HEK293 (cell line): ENCODE measurements at regions of chr11 and their contacts with region 1.

Region 1: DNA sequence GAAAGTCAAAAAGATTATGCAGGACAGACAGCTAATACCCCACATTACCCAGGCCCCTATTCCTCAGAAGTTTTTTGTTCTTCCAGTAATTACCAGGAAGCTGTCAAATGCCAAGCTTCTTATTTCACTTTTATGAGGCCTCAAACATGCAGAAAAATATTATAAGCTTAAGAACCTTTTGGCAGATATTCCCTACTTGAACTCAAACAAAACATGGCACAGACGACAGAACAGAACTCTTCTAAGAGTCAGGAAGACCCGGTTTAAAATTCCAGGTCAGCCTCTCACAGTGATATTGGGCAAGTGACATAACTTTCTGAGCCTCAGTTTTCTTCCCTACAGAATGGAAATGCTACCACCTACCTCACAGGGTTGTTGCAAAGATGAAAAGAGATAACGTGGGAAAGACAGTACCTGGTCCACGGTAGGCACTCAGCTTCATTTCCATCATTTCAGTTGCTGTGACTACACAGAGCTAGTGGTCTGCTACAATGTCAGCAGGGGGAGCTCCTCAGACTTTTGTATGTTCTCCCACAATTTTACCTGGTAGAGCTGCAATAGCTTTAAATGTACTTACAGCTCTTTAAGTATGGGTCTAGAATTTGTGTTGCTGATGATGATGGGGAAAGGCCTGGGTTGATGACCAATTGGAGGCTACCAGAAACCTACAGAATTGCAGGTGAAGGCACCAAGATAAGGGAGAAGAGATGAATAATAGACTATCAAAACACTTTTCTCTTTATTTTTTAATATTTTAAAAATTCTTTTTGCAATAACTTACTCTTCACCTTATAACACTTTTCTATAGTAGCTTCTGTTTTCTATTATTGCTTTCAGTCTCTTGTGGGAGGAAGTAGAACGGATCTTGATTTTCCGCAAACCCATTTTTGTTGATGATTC is 98.3 kb upstream of the CHRM4 start:
- H3K4me3 ChIP-seq: no peak overlapping the region
- H3K27ac ChIP-seq: no peak overlapping the region
- H3K4me1 ChIP-seq: no peaks in the 10 kb centered on the region
- CTCF ChIP-seq: no peak

Region 2: GRCh38 chr11:46392421-46393230 is 97.3 kb before region 1 on chr11:
- CTCF ChIA-PET with region 1: interaction called, 11 read pairs
- POLR2A ChIA-PET with region 1: no interaction called
- H3K4me3 ChIP-seq: peak overlapping the region; percentile 45
- H3K27ac ChIP-seq: no peak overlapping the region
- H3K4me1 ChIP-seq: no peaks in the 10 kb centered on the region
- CTCF ChIP-seq: no peak

Region 3: GRCh38 chr11:46513934-46514342 is 24.0 kb after region 1 on chr11:
- CTCF ChIA-PET with region 1: interaction called, 14 read pairs
- POLR2A ChIA-PET with region 1: no interaction called
- H3K4me3 ChIP-seq: no peak overlapping the region
- H3K27ac ChIP-seq: no peak overlapping the region
- H3K4me1 ChIP-seq: no peaks in the 10 kb centered on the region
- CTCF ChIP-seq: no peak

Region 4: GRCh38 chr11:46529095-46529905 is 39.4 kb after region 1 on chr11:
- CTCF ChIA-PET with region 1: interaction called, 46 read pairs
- POLR2A ChIA-PET with region 1: no interaction called
- H3K4me3 ChIP-seq: no peak overlapping the region
- H3K27ac ChIP-seq: no peak overlapping the region
- H3K4me1 ChIP-seq: no peaks in the 10 kb centered on the region
- CTCF ChIP-seq: peak; percentile 56; the same call in 1 of the 2 replicates

Region 5: GRCh38 chr11:46597609-46598219 is 107.8 kb after region 1 on chr11:
- CTCF ChIA-PET with region 1: no interaction called
- POLR2A ChIA-PET with region 1: no interaction called
- H3K4me3 ChIP-seq: no peak overlapping the region
- H3K27ac ChIP-seq: no peak overlapping the region
- H3K4me1 ChIP-seq: no peaks in the 10 kb centered on the region
- CTCF ChIP-seq: no peak

Region 6: DNA sequence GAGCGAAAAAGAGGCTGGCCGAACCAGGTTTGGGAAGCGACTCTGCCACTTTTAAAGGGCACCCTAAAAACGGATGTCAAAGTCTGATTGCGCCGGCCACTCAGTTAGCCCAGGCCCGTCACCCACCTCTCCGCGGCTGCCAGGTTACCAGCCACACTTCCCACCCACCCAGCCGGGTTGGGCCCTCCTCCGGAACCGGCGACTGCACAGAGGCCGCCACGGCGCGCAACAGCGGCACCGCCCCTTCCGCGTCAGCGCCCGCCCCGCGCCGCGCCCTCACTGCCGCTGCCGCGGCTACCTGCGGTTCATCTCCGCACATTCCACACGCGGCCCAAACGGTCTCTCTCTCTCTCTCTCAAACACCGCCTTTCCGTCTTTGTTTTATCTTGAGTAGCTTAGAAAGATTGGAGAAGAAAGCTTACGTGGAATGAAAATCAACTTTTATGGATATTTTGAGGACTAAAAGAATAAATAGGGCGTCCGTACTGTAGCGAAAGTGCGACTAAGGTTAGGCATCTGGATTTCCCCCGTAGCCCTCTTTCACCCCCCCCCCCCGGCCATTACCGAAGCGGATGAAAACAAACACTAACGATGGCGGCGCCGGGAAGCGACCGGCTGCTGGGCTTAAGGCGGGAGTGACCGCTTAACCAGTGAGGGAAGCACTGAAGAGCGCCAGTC is 127.2 kb after region 1 on chr11 and contains the starts of genes ATG13 and HARBI1:
- CTCF ChIA-PET with region 1: interaction called, 10 read pairs
- POLR2A ChIA-PET with region 1: no interaction called
- H3K4me3 ChIP-seq: peak within 1 kb of the TSS; percentile 79
- H3K27ac ChIP-seq: peak within 1 kb of the TSS; percentile 83
- H3K4me1 ChIP-seq: no peaks in the 10 kb centered on the region
- CTCF ChIP-seq: no peak